MCF 10A (cell line): ENCODE measurements at regions of chr10 and their contacts with region 1.

Region 1: DNA sequence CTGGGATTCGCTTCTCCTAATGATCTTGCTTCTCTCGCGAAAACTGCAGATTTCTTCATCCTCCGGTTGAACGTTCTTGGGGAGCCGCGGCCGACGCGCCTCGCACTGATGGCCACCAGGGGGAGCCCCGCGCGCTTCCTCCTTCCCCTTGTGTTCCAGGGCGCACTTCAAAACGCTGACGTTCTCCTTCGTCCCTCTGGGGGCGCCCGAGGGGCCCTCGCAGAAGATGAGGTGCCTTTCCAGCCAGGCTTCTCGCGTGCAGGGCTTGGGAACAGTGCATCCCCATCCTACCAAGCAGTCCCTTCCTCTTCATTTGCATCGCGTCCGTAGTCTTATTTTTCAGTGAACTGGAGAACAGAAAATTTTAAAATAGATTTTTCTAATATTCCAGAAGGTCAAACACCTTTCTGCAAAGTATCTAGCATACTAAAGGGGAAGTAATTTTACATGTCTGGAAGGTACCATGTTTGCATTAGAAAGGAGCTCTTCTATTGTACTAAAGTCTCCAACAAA is 22.5 kb downstream of the GSTO2 start:
- DNase-seq: peak; percentile 89
- H3K4me3 Mint-ChIP-seq: no peak overlapping the region
- H3K27ac Mint-ChIP-seq: no peak overlapping the region
- H3K4me1 Mint-ChIP-seq: peaks cover 4% of the 10 kb centered on the region
- H3K27me3 Mint-ChIP-seq: no peaks in the 10 kb centered on the region
- CTCF ChIP-seq: peak; percentile 98

Region 2: DNA sequence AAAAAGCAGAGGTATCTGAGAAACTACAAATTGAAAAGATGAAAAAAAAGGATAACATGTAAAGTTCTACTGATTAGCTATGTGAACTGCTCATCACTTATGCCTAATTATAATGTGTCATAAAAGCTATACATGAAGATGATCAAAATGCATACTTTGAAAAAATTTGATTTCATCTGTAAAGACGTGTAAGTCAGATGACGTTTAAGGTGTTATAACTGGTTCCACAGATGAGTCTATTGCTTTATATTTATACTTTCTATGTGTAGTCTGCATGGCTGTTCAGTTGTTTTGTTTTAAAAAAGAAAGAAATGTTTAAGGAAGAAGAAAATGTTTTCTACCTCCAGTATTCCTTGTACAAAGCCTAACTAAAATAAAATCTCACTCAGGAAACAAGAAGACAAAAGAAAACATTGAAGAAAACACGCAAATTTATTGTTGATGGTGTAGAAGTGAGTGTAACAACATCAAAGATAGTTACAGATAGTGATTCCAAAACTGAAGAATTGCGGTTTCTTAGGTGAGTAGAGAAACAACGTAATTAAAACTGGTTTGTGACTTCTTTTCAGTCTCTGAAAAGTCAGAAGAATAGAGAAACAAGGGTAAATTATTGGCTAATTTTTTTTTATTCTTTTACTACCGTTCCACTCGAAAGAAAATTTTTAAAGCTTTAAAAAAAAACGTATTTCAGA is 286.2 kb before region 1 on chr10:
- CTCF ChIA-PET with region 1: no interaction called
- POLR2A ChIA-PET with region 1: no interaction called
- intact Hi-C with region 1: no loop called
- DNase-seq: no peak
- H3K4me3 Mint-ChIP-seq: no peak overlapping the region
- H3K27ac Mint-ChIP-seq: no peak overlapping the region
- H3K4me1 Mint-ChIP-seq: peaks cover 6% of the 10 kb centered on the region
- H3K27me3 Mint-ChIP-seq: no peaks in the 10 kb centered on the region
- CTCF ChIP-seq: no peak

Region 3: GRCh38 chr10:104254493-104255310 is 36.8 kb before region 1 on chr10 and contains the start of gene GSTO1:
- CTCF ChIA-PET with region 1: interaction called, 11 read pairs
- POLR2A ChIA-PET with region 1: interaction called, 3 read pairs
- intact Hi-C with region 1: no loop called
- DNase-seq: peak; percentile 79
- H3K4me3 Mint-ChIP-seq: peak within 1 kb of the TSS; percentile 80
- H3K27ac Mint-ChIP-seq: peak within 1 kb of the TSS; percentile 85
- H3K4me1 Mint-ChIP-seq: peaks cover 28% of the 10 kb centered on the region
- H3K27me3 Mint-ChIP-seq: no peaks in the 10 kb centered on the region
- CTCF ChIP-seq: no peak
- total RNA-seq, gene GSTO1: 54.6 and 61.8 TPM in 2 replicates

Region 4: GRCh38 chr10:104274762-104275721 is 16.5 kb before region 1 on chr10:
- CTCF ChIA-PET with region 1: interaction called, 316 read pairs
- POLR2A ChIA-PET with region 1: interaction called, 7 read pairs
- intact Hi-C with region 1: no loop called
- DNase-seq: peak; percentile 73
- H3K4me3 Mint-ChIP-seq: peak overlapping the region; percentile 89
- H3K27ac Mint-ChIP-seq: peak overlapping the region; percentile 73
- H3K4me1 Mint-ChIP-seq: peaks cover 7% of the 10 kb centered on the region
- H3K27me3 Mint-ChIP-seq: no peaks in the 10 kb centered on the region
- CTCF ChIP-seq: peak; percentile 94

Region 5: DNA sequence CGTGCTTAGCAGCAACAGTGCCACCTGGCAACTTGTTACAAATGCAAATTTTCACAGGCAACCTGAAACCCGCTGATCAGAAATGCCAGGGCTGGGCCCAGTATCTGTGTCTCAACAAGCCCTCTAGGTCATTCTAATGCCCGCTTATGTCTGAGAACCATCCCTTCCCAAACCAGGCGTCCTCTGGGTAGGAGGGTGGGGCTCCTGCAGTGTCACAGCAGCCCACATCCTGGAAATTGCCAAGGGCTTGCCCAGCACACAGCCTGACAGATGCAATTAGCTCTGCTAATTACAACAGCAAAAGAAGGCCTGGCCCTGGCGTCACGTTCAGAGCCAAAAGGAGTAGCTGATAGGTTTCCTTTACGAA is 30.9 kb after region 1 on chr10:
- CTCF ChIA-PET with region 1: interaction called, 143 read pairs
- POLR2A ChIA-PET with region 1: interaction called, 7 read pairs
- intact Hi-C with region 1: no loop called
- DNase-seq: peak; percentile 91
- H3K4me3 Mint-ChIP-seq: no peak overlapping the region
- H3K27ac Mint-ChIP-seq: peak overlapping the region; percentile 95
- H3K4me1 Mint-ChIP-seq: peaks cover 74% of the 10 kb centered on the region
- H3K27me3 Mint-ChIP-seq: no peaks in the 10 kb centered on the region
- CTCF ChIP-seq: no peak

Region 6: DNA sequence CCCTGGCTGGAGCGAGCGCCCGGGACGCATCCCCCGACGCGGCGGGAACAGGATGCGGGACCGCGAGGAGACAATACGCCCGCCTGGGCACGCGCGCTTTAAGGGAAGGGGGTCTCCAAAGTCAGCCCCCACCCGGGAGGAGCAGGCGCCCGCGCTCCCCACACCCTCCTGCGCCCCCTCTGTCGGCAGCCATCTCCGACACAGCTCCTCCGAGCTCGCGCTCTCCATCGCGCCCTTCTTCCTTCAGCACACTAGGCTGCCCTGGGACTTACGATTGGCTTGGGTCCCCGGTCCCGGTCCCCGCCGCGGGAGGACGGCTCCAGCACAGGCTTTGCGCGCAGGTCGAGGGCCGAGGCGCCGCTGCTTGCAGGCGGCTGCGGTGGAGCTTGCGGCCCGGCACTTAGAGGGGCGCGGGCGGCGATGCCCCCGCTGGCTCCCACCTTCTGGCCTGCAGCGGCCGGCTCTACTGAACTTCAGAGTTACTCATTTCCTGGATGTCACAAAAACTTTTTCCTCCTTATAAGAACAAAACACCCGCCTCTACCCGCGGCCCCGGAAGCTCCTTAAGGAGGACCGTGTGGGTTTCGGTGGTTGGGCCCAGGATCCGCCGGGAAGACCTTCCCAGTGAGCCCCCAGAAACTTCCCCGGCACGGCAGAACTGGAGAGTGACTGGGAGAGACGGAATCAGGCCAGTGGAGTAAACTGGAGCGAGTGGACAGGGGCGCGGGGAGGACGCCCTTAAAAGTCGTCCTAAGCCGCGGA is 46.7 kb after region 1 on chr10 and contains the start of gene ITPRIP:
- CTCF ChIA-PET with region 1: interaction called, 79 read pairs
- POLR2A ChIA-PET with region 1: interaction called, 4 read pairs
- intact Hi-C with region 1: loop called (anchors 1 kb)
- DNase-seq: peak; percentile 81
- H3K4me3 Mint-ChIP-seq: peak within 1 kb of the TSS; percentile 80
- H3K27ac Mint-ChIP-seq: peak within 1 kb of the TSS; percentile 97
- H3K4me1 Mint-ChIP-seq: peaks cover 39% of the 10 kb centered on the region
- H3K27me3 Mint-ChIP-seq: no peaks in the 10 kb centered on the region
- CTCF ChIP-seq: no peak
- total RNA-seq, gene ITPRIP: 29.4 and 29.8 TPM in 2 replicates

Region 7: DNA sequence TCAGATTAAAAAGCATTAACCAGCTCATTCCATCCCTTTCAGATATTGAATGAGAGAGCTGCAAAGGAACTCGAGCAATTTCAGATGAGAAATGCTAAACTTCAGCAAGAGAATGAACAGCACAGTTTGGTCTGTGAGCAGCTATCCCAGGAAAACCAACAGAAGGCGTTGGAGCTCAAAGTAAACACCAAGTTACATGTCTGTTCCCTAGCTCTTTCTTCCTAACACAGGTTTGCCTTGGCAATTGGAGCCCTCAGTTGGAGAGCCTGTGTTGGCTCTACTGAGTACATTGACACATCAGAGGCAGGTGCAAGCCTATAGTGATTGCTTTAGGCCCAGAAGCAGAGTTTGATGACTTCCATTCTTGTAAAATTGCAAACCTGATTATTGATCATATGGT is 76.9 kb after region 1 on chr10:
- CTCF ChIA-PET with region 1: interaction called, 10 read pairs
- POLR2A ChIA-PET with region 1: no interaction called
- intact Hi-C with region 1: no loop called
- DNase-seq: no peak
- H3K4me3 Mint-ChIP-seq: no peak overlapping the region
- H3K27ac Mint-ChIP-seq: no peak overlapping the region
- H3K4me1 Mint-ChIP-seq: no peaks in the 10 kb centered on the region
- H3K27me3 Mint-ChIP-seq: no peaks in the 10 kb centered on the region
- CTCF ChIP-seq: no peak

Region 8: GRCh38 chr10:104521901-104522694 is 230.6 kb after region 1 on chr10:
- CTCF ChIA-PET with region 1: no interaction called
- POLR2A ChIA-PET with region 1: no interaction called
- intact Hi-C with region 1: no loop called
- DNase-seq: no peak
- H3K4me3 Mint-ChIP-seq: no peak overlapping the region
- H3K27ac Mint-ChIP-seq: no peak overlapping the region
- H3K4me1 Mint-ChIP-seq: no peaks in the 10 kb centered on the region
- H3K27me3 Mint-ChIP-seq: no peaks in the 10 kb centered on the region
- CTCF ChIP-seq: no peak

Region 9: DNA sequence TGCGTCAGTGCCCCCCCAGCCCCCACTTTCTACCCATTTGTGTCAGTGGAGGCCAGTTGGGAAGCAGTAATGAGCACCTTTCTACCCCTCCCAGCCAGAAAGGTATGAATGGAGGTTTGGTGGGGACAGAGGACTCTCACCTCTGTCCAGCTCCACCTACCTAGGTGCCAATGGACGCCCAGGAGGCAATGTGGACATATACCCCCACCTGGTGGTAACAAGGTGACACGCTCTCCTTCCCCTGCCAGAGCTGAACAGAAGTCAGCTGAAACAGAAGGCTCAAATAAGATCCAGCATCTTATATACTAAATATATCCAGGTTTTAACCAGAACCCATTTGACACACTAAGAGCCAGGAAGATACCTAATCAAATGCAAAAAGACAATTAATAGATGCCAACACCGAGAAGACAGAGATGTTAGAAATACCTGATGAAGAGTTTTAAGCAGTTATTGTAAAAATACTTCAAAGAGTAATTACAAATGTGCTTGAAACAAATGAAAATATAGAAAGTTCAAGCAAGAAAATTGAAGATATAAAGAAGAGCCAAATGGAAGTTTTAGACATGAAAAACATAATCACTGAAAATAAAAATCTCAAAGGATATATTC is 331.2 kb after region 1 on chr10:
- CTCF ChIA-PET with region 1: interaction called, 4 read pairs
- POLR2A ChIA-PET with region 1: no interaction called
- intact Hi-C with region 1: loop called (anchors 5 kb)
- DNase-seq: peak; percentile 67
- H3K4me3 Mint-ChIP-seq: no peak overlapping the region
- H3K27ac Mint-ChIP-seq: no peak overlapping the region
- H3K4me1 Mint-ChIP-seq: no peaks in the 10 kb centered on the region
- H3K27me3 Mint-ChIP-seq: peaks cover 41% of the 10 kb centered on the region
- CTCF ChIP-seq: peak; percentile 87